Mammary epithelial cell (primary cell): ENCODE measurements at regions of chr14 and their contacts with region 1.

Region 1: DNA sequence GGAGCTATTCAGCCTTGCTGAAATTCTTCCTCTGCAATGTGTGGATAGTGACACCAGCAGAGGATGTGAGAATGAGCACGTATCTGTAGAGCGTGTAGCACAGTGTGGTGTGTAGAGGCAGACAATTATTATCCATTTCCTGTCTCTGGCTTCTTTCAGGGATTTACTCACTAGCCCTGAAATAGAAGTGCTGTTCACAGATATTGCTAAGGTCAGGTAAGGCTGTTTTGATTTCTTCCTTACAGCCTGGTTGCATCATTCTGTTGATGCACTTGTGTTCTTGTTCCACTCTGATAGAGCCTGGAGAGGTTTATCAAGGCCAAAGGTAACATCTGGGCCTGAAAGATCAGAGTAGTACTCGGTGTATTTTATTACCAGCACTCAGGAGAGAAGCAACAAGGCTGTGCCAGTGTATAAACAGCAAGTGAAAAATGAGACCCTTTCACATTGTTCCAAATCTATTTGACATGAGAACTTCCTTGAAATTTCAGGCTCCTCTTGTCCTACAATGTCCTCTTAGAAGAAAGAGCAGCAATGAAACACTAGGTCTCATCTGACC is 16.7 kb downstream of the ARG2 start:
- DNase-seq: peak; percentile 3
- H3K4me3 ChIP-seq: no peak overlapping the region
- H3K27ac ChIP-seq: no peak overlapping the region
- H3K4me1 ChIP-seq: no peaks in the 10 kb centered on the region
- H3K27me3 ChIP-seq: no peaks in the 10 kb centered on the region
- CTCF ChIP-seq: no peak

Region 2: DNA sequence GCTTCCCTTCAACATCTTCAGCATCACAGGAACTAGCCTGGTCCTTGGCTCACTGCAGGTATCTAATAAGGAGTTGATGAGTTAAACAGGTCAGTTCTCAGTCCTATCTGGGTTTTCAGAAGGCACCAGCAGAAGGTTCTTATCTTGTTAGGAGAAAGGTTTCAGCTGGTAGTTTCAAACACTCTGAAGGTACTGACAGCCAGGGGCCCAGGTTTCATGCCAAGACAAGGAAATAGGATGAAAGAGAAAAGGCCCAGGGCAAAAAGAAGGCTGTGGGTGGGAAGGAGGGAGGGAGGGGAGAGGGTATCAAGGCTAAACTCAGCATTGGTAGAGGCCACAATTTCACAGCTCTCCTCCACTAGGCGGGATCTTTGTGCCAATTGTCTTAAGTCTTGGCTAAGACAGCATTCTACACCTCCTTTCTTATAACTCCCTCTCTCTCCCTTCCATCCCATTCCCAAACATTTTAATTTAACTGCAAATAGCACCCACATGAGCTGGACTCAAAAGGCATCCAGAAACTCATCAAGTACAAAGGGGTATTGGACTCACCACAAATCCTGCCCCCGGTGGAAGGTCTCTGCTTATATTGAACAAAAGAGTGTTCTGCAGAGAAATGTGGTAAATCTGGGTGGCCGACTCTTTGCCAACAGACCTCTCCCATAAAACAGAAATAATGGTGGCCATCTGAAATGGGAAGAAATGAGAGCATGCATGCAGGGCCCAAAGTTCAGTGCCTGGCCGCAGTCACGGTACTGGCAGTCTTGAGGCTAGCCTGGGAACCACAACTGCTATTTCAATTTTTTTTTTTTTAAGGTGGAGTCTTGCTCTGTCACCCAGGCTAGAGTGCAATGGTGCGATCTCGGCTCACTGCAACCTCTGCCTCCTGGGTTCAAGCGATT is 169.0 kb before region 1 on chr14:
- CTCF ChIA-PET with region 1: interaction called, 12 read pairs
- dilution Hi-C with region 1: no loop called
- in situ Hi-C with region 1: no loop called
- intact Hi-C with region 1: no loop called
- DNase-seq: no peak
- H3K4me3 ChIP-seq: no peak overlapping the region
- H3K27ac ChIP-seq: no peak overlapping the region
- H3K4me1 ChIP-seq: no peaks in the 10 kb centered on the region
- H3K27me3 ChIP-seq: no peaks in the 10 kb centered on the region
- CTCF ChIP-seq: peak; percentile 5 to 40

Region 3: DNA sequence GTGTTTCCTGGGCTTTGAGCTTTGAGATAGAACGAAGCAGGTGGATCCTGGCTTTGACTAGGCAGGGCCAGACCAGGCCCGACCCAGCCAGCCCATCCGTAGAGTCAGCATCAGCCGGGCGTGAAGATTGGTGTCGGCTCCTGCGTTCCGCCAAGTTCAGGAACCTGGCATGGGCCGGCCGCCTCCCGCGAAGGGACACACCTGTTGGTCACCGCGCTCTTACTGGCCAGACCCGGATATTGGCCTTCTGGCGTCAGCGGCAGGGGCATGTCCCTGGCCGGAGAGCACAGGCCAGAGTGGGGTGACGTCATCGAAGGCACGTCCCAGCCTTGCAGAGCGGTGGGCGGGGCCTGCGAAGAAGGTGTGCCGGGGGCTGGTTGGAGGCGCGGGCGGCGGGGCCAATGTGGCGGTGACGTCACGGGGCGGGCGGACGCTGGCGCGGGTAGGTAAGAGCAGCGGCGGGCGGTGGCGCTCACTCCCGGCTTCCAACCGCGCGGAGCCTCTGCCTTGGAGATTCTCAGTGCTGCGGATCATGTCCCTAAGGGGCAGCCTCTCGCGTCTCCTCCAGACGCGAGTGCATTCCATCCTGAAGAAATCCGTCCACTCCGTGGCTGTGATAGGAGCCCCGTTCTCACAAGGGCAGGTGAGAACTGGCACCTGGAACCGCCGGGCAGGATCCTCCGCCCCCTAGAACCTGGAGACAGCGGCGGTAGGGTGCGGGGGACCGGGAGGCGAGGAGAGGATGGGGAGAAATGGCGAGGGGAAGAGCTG is 16.8 kb before region 1 on chr14 and contains the start of gene ARG2:
- CTCF ChIA-PET with region 1: interaction called, 14 read pairs
- dilution Hi-C with region 1: no loop called
- in situ Hi-C with region 1: no loop called
- intact Hi-C with region 1: no loop called
- DNase-seq: peak; percentile 95
- H3K4me3 ChIP-seq: peak within 1 kb of the TSS; percentile 73 to 85 (median 81)
- H3K27ac ChIP-seq: peak within 1 kb of the TSS; percentile 69
- H3K4me1 ChIP-seq: peaks cover 28% of the 10 kb centered on the region
- H3K27me3 ChIP-seq: no peaks in the 10 kb centered on the region
- CTCF ChIP-seq: peak in 1 of 2 donors; percentile 13
- total RNA-seq, gene ARG2: 5.0 to 19.1 TPM

Region 4: DNA sequence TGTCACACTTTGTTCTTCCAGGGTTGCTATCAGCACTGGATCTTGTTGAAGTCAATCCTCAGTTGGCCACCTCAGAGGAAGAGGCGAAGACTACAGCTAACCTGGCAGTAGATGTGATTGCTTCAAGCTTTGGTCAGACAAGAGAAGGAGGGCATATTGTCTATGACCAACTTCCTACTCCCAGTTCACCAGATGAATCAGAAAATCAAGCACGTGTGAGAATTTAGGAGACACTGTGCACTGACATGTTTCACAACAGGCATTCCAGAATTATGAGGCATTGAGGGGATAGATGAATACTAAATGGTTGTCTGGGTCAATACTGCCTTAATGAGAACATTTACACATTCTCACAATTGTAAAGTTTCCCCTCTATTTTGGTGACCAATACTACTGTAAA is 14.3 kb after region 1 on chr14:
- CTCF ChIA-PET with region 1: no interaction called
- dilution Hi-C with region 1: no loop called
- in situ Hi-C with region 1: no loop called
- intact Hi-C with region 1: loop called (anchors 2 kb)
- DNase-seq: peak; percentile 85
- H3K4me3 ChIP-seq: no peak overlapping the region
- H3K27ac ChIP-seq: peak overlapping the region; percentile 58
- H3K4me1 ChIP-seq: peaks cover 16% of the 10 kb centered on the region
- H3K27me3 ChIP-seq: no peaks in the 10 kb centered on the region
- CTCF ChIP-seq: no peak

Region 5: GRCh38 chr14:67674481-67675169 is 38.2 kb after region 1 on chr14 and contains the start of gene VTI1B:
- CTCF ChIA-PET with region 1: no interaction called
- dilution Hi-C with region 1: no loop called
- in situ Hi-C with region 1: no loop called
- intact Hi-C with region 1: no loop called
- DNase-seq: peak; percentile 73
- H3K4me3 ChIP-seq: peak within 1 kb of the TSS; percentile 75 to 95 (median 93)
- H3K27ac ChIP-seq: peak within 1 kb of the TSS; percentile 89
- H3K4me1 ChIP-seq: peaks cover 20% of the 10 kb centered on the region
- H3K27me3 ChIP-seq: no peaks in the 10 kb centered on the region
- CTCF ChIP-seq: peak in 1 of 2 donors; percentile 23
- total RNA-seq, gene VTI1B: 37.3 to 72.8 TPM

Region 6: GRCh38 chr14:68440820-68441219 is 804.4 kb after region 1 on chr14:
- CTCF ChIA-PET with region 1: no interaction called
- dilution Hi-C with region 1: no loop called
- in situ Hi-C with region 1: no loop called
- intact Hi-C with region 1: no loop called
- DNase-seq: no peak
- H3K4me3 ChIP-seq: no peak overlapping the region
- H3K27ac ChIP-seq: no peak overlapping the region
- H3K4me1 ChIP-seq: peaks cover 26% of the 10 kb centered on the region
- H3K27me3 ChIP-seq: no peaks in the 10 kb centered on the region
- CTCF ChIP-seq: no peak